CD4-positive, alpha-beta T cell (primary cell): ENCODE measurements at regions of chr10 and their contacts with region 1.

Region 1: GRCh38 chr10:88260329-88261051 is 322.6 kb downstream of the RNLS start:
- DNase-seq: no peak
- ATAC-seq: no peak
- H3K4me3 ChIP-seq: no peak overlapping the region
- H3K4me3 Mint-ChIP-seq: no peak overlapping the region
- H3K27ac ChIP-seq: no peak overlapping the region
- H3K27ac Mint-ChIP-seq: no peak overlapping the region
- H3K4me1 ChIP-seq: no peaks in the 10 kb centered on the region
- H3K4me1 Mint-ChIP-seq: no peaks in the 10 kb centered on the region
- H3K27me3 ChIP-seq: no peaks in the 10 kb centered on the region
- H3K27me3 Mint-ChIP-seq: no peaks in the 10 kb centered on the region
- CTCF ChIP-seq: no peak

Region 2: DNA sequence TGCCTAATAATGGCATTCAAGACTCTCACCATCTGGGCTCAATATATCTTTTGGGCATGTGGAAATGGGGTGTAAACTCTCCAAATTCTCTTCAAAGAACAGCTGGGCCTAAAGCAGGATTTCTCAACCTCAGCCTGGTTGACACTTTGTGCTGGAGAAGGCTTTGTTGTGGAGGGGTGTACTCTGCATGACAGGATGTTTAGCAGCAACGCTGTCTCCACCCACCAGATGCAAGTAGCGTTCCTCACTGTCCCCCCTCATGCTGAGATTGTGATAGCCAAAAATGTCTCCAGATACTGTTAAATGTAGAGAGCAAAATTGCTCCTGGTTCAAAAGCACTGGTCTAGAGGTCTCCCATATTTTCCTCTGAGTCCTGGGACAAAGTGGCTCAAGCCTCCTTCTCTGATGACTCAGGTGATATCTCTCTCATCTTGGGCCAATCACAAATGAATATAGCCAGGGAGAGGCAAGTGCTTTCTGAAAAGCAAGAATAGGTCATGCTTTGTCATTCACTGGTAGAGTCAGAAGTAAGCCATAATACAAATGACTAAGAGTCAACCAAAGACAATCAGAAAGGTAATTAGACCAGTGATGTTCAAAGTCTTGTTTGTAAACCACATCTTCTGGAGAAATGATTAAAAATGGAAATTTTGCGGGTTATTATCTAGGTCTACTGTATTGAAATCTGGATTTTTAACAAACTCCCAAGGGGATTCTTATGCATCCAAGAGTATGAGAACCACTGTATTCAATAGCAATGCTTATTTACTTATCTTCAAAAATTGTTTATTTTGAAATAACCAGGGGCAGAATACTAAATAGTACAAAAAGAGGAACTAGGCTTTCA is 66.2 kb before region 1 on chr10:
- CTCF ChIA-PET with region 1: no interaction called
- POLR2A ChIA-PET with region 1: no interaction called
- intact Hi-C with region 1: loop called in 1 of 2 experiments (anchors 10 kb)
- DNase-seq: peak; percentile 16 to 89 (median 40)
- ATAC-seq: peak; percentile 97
- H3K4me3 ChIP-seq: peak overlapping the region; percentile 19
- H3K4me3 Mint-ChIP-seq: peak overlapping the region; percentile 47
- H3K27ac ChIP-seq: peak overlapping the region; percentile 9 to 57
- H3K27ac Mint-ChIP-seq: peak overlapping the region; percentile 77
- H3K4me1 ChIP-seq: peaks cover 27% of the 10 kb centered on the region
- H3K4me1 Mint-ChIP-seq: peaks cover 61% of the 10 kb centered on the region
- H3K27me3 ChIP-seq: no peaks in the 10 kb centered on the region
- H3K27me3 Mint-ChIP-seq: no peaks in the 10 kb centered on the region
- CTCF ChIP-seq: no peak

Region 3: GRCh38 chr10:88437411-88437810 is 176.9 kb after region 1 on chr10:
- CTCF ChIA-PET with region 1: no interaction called
- POLR2A ChIA-PET with region 1: no interaction called
- intact Hi-C with region 1: no loop called
- DNase-seq: no peak
- ATAC-seq: no peak
- H3K4me3 ChIP-seq: no peak overlapping the region
- H3K4me3 Mint-ChIP-seq: no peak overlapping the region
- H3K27ac ChIP-seq: no peak overlapping the region
- H3K27ac Mint-ChIP-seq: no peak overlapping the region
- H3K4me1 ChIP-seq: no peaks in the 10 kb centered on the region
- H3K4me1 Mint-ChIP-seq: no peaks in the 10 kb centered on the region
- H3K27me3 ChIP-seq: no peaks in the 10 kb centered on the region
- H3K27me3 Mint-ChIP-seq: no peaks in the 10 kb centered on the region
- CTCF ChIP-seq: no peak